Activated CD8-positive, alpha-beta T cell treated with anti-CD3 and anti-CD28 coated beads for 36 hours (primary cell): ENCODE measurements at regions of chr5 and their contacts with region 1.

Region 1: DNA sequence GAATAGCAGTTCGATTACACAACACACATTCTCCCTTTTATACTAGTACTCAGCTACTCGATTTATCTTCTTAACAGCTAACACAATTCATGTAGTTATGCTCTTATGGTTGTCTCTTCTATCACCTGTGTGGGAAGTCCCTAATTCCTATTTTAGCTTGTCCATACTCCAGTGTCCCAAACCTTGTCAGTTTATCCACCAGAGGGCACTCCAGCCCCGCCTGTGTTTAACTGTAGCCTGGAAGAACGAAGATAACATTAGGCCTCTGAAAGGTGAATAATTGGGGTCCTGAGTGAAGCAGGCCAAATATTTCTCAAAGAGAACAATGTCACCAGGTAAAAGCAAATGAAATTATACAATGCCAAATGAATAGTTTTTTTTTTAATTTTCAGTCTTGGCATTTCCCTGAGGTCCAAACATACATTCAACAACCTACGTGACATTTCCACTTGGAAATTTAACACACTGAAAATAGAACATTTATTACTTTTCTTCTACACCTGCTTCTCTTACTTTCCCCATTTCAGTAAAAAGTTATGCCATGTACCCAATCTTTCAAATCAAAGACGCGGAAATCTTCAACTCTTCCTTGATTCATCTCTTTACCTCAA is 560.7 kb downstream of the HTR1A start:
- DNase-seq: peak; percentile 59
- ATAC-seq: no peak
- H3K4me3 Mint-ChIP-seq: no peak overlapping the region
- H3K27ac Mint-ChIP-seq: no peak overlapping the region
- H3K4me1 Mint-ChIP-seq: no peaks in the 10 kb centered on the region
- H3K27me3 Mint-ChIP-seq: no peaks in the 10 kb centered on the region
- CTCF ChIP-seq: peak; percentile 55

Region 2: DNA sequence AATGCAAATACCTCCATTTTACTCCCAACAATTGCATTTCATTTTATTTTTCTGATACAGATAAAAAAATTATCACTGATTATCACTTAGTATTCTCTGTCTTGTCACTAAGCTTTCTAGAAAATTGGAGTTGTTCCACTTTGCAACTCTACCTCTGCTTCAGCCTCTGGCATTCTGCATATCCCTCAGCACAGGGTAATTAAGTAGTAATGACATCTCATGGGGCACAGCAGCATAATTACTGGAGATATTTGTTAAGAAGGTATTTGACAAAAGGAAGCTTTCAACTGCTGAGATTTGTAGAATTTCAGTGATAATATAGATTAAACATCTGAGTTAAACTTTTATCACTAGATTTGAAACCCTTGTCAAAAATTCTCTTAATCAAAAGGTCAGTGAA is 114.5 kb after region 1 on chr5:
- CTCF ChIA-PET with region 1: no interaction called
- POLR2A ChIA-PET with region 1: no interaction called
- intact Hi-C with region 1: no loop called
- DNase-seq: no peak
- ATAC-seq: no peak
- H3K4me3 Mint-ChIP-seq: no peak overlapping the region
- H3K27ac Mint-ChIP-seq: no peak overlapping the region
- H3K4me1 Mint-ChIP-seq: no peaks in the 10 kb centered on the region
- H3K27me3 Mint-ChIP-seq: no peaks in the 10 kb centered on the region
- CTCF ChIP-seq: no peak

Region 3: GRCh38 chr5:63963080-63963735 is 561.7 kb after region 1 on chr5:
- CTCF ChIA-PET with region 1: no interaction called
- POLR2A ChIA-PET with region 1: no interaction called
- intact Hi-C with region 1: loop called (anchors 5 kb)
- DNase-seq: peak; percentile 53
- ATAC-seq: no peak
- H3K4me3 Mint-ChIP-seq: no peak overlapping the region
- H3K27ac Mint-ChIP-seq: no peak overlapping the region
- H3K4me1 Mint-ChIP-seq: no peaks in the 10 kb centered on the region
- H3K27me3 Mint-ChIP-seq: peaks cover 34% of the 10 kb centered on the region
- CTCF ChIP-seq: peak; percentile 44